ENCODE measurements at regions of chr9 and their contacts with region 1.

Region 1: GRCh38 chr9:114108016-114108833 is 9.1 kb upstream of the KIF12 start:
- DNase-seq: peak; percentile 56 to 78 (median 73)
- H3K4me3 ChIP-seq: no peak overlapping the region
- H3K27ac ChIP-seq: no peak overlapping the region
- H3K4me1 ChIP-seq: no peaks in the 10 kb centered on the region
- H3K27me3 ChIP-seq: peaks cover 0 to 9% (median 2%) of the 10 kb centered on the region in 5 experiments

Region 2: GRCh38 chr9:114096041-114096511 is 12.1 kb before region 1 on chr9:
- CTCF ChIA-PET with region 1: interaction called, 12 read pairs
- POLR2A ChIA-PET with region 1: no interaction called
- DNase-seq: peak in 1 of 3 donors; percentile 7
- H3K4me3 ChIP-seq: no peak overlapping the region
- H3K27ac ChIP-seq: no peak overlapping the region
- H3K4me1 ChIP-seq: peaks cover 5 to 23% (median 12%) of the 10 kb centered on the region in 4 experiments
- H3K27me3 ChIP-seq: peaks cover 0 to 32% (median 19%) of the 10 kb centered on the region in 5 experiments

Region 3: GRCh38 chr9:114155263-114155972 is 47.2 kb after region 1 on chr9 and contains the start of gene COL27A1:
- CTCF ChIA-PET with region 1: interaction called, 19 read pairs
- POLR2A ChIA-PET with region 1: no interaction called
- DNase-seq: peak; percentile 65 to 84 (median 80)
- H3K4me3 ChIP-seq: peak within 1 kb of the TSS; percentile 11 to 76 (median 58)
- H3K27ac ChIP-seq: no peak within 1 kb of the TSS
- H3K4me1 ChIP-seq: peaks cover 0 to 28% (median 16%) of the 10 kb centered on the region in 4 experiments
- H3K27me3 ChIP-seq: peaks cover 0 to 67% (median 30%) of the 10 kb centered on the region in 5 experiments

Region 4: GRCh38 chr9:114291064-114291474 is 182.8 kb after region 1 on chr9:
- CTCF ChIA-PET with region 1: interaction called, 90 read pairs
- POLR2A ChIA-PET with region 1: no interaction called
- DNase-seq: peak; percentile 55 to 72 (median 58)
- H3K4me3 ChIP-seq: no peak overlapping the region
- H3K27ac ChIP-seq: no peak overlapping the region
- H3K4me1 ChIP-seq: peaks cover 0 to 1% (median 0%) of the 10 kb centered on the region in 4 experiments
- H3K27me3 ChIP-seq: no peaks in the 10 kb centered on the region

Region 5: DNA sequence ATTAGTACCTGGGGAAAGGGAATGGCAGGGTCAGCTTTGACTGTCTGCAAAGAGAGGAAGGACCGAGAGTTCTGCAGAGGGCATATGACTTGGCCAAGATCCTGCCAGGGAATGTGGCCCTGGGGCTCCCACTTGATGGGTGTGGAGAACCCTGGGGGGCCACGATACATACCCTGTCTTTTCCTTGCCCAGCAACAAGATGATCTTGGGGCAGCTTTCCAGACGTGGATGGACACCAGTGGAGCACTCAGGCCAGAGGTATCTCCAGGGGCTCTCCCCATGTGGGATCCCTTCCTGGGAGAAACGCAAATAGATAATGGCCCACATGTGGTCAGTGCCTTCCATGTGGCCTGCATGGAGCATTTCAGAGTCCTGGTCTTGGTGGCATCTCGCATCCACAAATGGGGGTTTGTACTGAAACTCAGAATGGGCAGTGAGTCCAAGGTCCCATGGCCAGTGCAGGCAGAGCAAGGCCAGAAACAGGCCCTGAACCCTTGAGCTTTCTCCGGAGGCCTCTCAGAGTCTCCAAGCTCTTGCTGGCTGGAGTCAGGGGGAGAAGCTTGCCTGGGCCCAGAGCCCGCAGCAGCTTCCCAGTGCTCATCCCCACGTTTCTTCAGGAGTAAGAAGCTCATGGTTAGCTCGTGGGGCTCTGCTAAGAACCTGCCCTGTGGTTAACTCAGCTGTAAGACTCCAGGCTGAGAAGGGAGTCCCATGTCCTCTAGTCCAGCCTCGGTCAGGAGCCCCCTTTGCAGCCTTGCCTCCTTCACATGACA is 196.4 kb after region 1 on chr9:
- CTCF ChIA-PET with region 1: interaction called, 12 read pairs
- POLR2A ChIA-PET with region 1: no interaction called
- DNase-seq: no peak
- H3K4me3 ChIP-seq: no peak overlapping the region
- H3K27ac ChIP-seq: no peak overlapping the region
- H3K4me1 ChIP-seq: no peaks in the 10 kb centered on the region
- H3K27me3 ChIP-seq: peaks cover 0 to 6% (median 0%) of the 10 kb centered on the region in 5 experiments

Region 6: GRCh38 chr9:114611516-114612271 is 503.5 kb after region 1 on chr9:
- CTCF ChIA-PET with region 1: no interaction called
- POLR2A ChIA-PET with region 1: no interaction called
- DNase-seq: peak; percentile 25 to 62 (median 56)
- H3K4me3 ChIP-seq: peak overlapping the region; percentile 60 to 89 (median 77)
- H3K27ac ChIP-seq: peak overlapping the region; percentile 47 to 82
- H3K4me1 ChIP-seq: peaks cover 3 to 46% (median 42%) of the 10 kb centered on the region in 4 experiments
- H3K27me3 ChIP-seq: no peaks in the 10 kb centered on the region